Activated T-helper 1 cell treated with anti-CD3 and anti-CD28 coated beads, Interleukin-12 subunit alpha, Interleukin-12 subunit beta, Interleukin-2, Interleukin-4 antibody, amounts not matched to agents 30 ng/mL and 10 ng/mL and 1 ng/mL, durations not matched to agents 14 hours and 24 hours and 36 hours (primary cell): ENCODE measurements at regions of chr10 and their contacts with region 1.

Region 1: GRCh38 chr10:63629363-63630084 is 108.3 kb downstream of the REEP3 start:
- DNase-seq: peak; percentile 71
- H3K4me3 Mint-ChIP-seq: peak overlapping the region; percentile 89
- H3K27ac Mint-ChIP-seq: peak overlapping the region; percentile 90
- H3K4me1 Mint-ChIP-seq: peaks cover 37% of the 10 kb centered on the region
- H3K27me3 Mint-ChIP-seq: no peaks in the 10 kb centered on the region

Region 2: DNA sequence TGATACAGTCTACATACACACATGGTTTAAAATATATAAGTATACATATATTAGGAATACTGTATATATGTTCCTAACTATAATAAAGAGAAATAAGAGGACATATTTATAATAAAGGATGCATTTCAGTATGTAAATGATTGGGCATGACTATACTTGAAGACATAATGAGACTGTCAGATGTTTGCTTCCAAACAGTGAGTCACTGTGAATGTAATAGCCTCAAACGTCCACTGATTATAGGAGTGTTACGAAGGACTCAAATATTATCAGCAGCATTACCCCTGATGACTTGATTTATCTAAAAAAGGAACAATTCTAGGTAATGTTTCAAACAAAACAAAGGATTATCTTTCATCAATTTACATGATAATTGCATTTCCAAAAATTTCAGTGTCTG is 536.3 kb before region 1 on chr10:
- intact Hi-C with region 1: no loop called
- DNase-seq: no peak
- H3K4me3 Mint-ChIP-seq: no peak overlapping the region
- H3K27ac Mint-ChIP-seq: no peak overlapping the region
- H3K4me1 Mint-ChIP-seq: no peaks in the 10 kb centered on the region
- H3K27me3 Mint-ChIP-seq: peaks cover 3% of the 10 kb centered on the region

Region 3: GRCh38 chr10:63133056-63133820 is 496.3 kb before region 1 on chr10 and contains the start of gene NRBF2:
- intact Hi-C with region 1: loop called (anchors 1 kb)
- DNase-seq: peak; percentile 97
- H3K4me3 Mint-ChIP-seq: peak within 1 kb of the TSS; percentile 91
- H3K27ac Mint-ChIP-seq: peak within 1 kb of the TSS; percentile 83
- H3K4me1 Mint-ChIP-seq: peaks cover 32% of the 10 kb centered on the region
- H3K27me3 Mint-ChIP-seq: peaks cover 3% of the 10 kb centered on the region
- total RNA-seq, gene NRBF2: 30.0 and 30.8 TPM in 2 replicates

Region 4: GRCh38 chr10:63217120-63217605 is 412.4 kb before region 1 on chr10:
- intact Hi-C with region 1: loop called (anchors 1 kb)
- DNase-seq: no peak
- H3K4me3 Mint-ChIP-seq: no peak overlapping the region
- H3K27ac Mint-ChIP-seq: peak overlapping the region; percentile 13
- H3K4me1 Mint-ChIP-seq: peaks cover 51% of the 10 kb centered on the region
- H3K27me3 Mint-ChIP-seq: no peaks in the 10 kb centered on the region

Region 5: GRCh38 chr10:63465293-63466143 is 164.0 kb before region 1 on chr10 and contains the start of gene JMJD1C:
- intact Hi-C with region 1: loop called (anchors 2 kb)
- DNase-seq: peak; percentile 47
- H3K4me3 Mint-ChIP-seq: peak within 1 kb of the TSS; percentile 90
- H3K27ac Mint-ChIP-seq: peak within 1 kb of the TSS; percentile 68
- H3K4me1 Mint-ChIP-seq: peaks cover 21% of the 10 kb centered on the region
- H3K27me3 Mint-ChIP-seq: peaks cover 28% of the 10 kb centered on the region
- total RNA-seq, gene JMJD1C: 47.3 and 48.0 TPM in 2 replicates

Region 6: DNA sequence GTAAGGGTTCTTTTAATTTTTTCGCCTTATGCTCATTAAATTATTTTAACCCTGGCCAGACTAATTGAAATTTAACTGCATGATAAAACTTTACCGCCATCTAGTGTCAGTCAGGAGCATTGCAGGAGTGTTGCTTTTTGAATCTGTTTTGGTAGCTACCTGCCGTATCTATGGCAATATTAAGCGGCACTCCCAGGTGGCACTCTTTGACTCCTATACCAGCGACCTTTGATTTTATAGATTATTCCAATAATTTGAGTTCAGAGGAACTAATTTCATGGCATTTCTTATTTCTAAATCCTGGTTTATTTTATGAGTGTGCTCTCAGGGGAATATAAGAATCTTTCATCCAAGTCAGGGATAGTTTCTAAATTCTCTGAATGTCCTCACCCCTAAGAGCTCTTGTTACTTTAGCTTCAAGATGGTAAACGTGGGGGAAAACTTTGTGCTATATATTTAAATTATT is 90.6 kb after region 1 on chr10:
- intact Hi-C with region 1: loop called (anchors 1 kb)
- DNase-seq: peak; percentile 17
- H3K4me3 Mint-ChIP-seq: peak overlapping the region; percentile 51
- H3K27ac Mint-ChIP-seq: no peak overlapping the region
- H3K4me1 Mint-ChIP-seq: peaks cover 34% of the 10 kb centered on the region
- H3K27me3 Mint-ChIP-seq: peaks cover 4% of the 10 kb centered on the region

Region 7: DNA sequence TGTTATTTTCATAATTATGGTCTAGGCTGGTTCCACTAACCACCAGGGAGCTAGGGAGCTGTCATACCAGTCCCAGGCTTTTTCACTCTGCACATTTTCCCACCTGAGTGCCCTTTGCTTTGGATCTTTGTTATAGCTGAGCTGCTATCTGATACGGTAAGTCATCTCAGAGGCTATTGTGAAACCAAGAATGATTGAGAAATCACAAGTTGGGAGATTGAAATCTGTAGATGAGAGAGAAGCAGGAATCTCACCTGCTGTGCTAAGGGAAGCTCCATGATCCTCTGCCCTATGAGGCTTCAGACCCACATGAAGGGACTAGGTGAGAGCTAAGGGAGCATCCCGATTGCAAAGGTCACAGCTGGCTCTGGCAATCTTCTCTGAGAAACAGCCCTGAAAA is 199.5 kb after region 1 on chr10:
- intact Hi-C with region 1: no loop called
- DNase-seq: no peak
- H3K4me3 Mint-ChIP-seq: no peak overlapping the region
- H3K27ac Mint-ChIP-seq: no peak overlapping the region
- H3K4me1 Mint-ChIP-seq: no peaks in the 10 kb centered on the region
- H3K27me3 Mint-ChIP-seq: peaks cover 1% of the 10 kb centered on the region